ENCODE measurements at regions of chr5 and their contacts with region 1.

Region 1: DNA sequence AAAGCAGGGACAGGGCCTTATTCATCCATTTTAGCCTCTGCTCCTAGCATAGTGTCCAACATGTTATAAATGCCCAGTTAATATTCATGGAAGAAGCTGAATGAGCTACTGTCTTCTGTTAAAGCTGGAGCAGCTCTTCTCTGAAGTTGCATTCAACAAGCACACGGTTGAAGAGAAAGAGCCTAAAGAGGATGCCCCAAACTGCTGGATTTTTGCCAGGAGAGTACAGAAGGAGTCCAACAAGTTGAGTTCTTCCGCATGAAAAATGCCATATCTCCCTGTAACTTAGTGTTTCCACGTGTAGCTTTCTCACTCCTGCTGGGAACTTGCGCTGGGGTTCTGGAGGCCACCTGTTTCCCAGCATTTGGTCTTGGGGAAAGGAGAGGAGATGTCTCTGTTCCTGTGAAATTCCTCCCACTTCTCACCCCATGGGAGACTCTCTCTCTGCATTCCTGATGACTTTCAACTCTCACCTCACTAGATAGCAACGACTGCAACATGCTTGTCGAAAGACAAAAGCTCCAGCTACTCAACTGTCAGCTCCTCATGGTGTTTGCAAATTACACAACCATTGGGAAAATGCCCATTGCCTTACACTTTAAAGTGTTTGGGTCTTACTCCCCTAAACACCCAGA is 122.8 kb downstream of the KIF4B start:
- DNase-seq: no peak
- H3K4me3 Mint-ChIP-seq: no peak overlapping the region
- H3K27ac Mint-ChIP-seq: no peak overlapping the region
- H3K4me1 Mint-ChIP-seq: peaks cover 9% of the 10 kb centered on the region
- H3K27me3 Mint-ChIP-seq: no peaks in the 10 kb centered on the region
- CTCF ChIP-seq: no peak

Region 2: GRCh38 chr5:155147222-155147621 is 10.9 kb after region 1 on chr5:
- CTCF ChIA-PET with region 1: interaction called, 17 read pairs
- POLR2A ChIA-PET with region 1: no interaction called
- intact Hi-C with region 1: no loop called
- DNase-seq: peak; percentile 39
- H3K4me3 Mint-ChIP-seq: no peak overlapping the region
- H3K27ac Mint-ChIP-seq: no peak overlapping the region
- H3K4me1 Mint-ChIP-seq: no peaks in the 10 kb centered on the region
- H3K27me3 Mint-ChIP-seq: no peaks in the 10 kb centered on the region
- CTCF ChIP-seq: peak; percentile 49

Region 3: DNA sequence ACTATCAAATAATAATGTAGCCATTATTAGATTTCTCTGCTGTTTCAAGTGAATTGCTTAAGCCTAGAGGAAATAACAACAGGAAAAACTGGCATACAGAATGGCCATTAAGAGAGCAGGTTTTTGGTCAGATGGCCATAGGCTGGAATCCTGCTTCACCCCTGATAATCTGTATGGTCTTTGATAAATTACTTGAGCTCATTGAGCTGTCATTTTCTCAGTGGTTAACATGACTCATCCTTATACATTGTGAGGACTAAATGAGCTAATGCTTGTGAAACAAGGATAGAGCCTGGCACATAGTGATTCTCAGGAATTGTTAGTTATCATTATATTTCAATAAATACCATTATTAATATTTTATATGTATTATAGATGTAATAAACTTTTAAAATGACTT is 393.7 kb after region 1 on chr5:
- CTCF ChIA-PET with region 1: interaction called, 13 read pairs
- POLR2A ChIA-PET with region 1: no interaction called
- intact Hi-C with region 1: no loop called
- DNase-seq: peak; percentile 43
- H3K4me3 Mint-ChIP-seq: peak overlapping the region; percentile 22
- H3K27ac Mint-ChIP-seq: peak overlapping the region; percentile 81
- H3K4me1 Mint-ChIP-seq: peaks cover 47% of the 10 kb centered on the region
- H3K27me3 Mint-ChIP-seq: no peaks in the 10 kb centered on the region
- CTCF ChIP-seq: no peak

Region 4: DNA sequence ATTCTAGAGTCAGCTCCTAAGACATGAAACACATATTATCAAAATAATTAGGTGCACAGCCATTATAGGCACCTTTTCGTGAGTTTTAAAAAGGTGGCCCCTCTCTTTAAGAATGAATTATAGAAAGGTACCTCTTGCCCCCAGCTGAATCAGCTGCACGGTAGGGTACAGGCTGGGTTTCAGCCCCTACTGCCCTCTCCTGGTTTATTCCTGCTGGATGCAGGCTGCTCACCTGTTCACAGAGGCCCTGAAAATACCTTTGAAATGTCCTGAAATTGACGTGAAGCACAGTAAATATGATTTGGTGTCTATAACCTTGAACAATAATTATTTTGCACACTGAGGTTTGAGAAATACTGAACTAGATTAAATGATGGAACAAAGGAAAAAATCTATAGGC is 685.8 kb after region 1 on chr5:
- CTCF ChIA-PET with region 1: interaction called, 13 read pairs
- POLR2A ChIA-PET with region 1: no interaction called
- intact Hi-C with region 1: loop called (anchors 10 kb)
- DNase-seq: no peak
- H3K4me3 Mint-ChIP-seq: no peak overlapping the region
- H3K27ac Mint-ChIP-seq: no peak overlapping the region
- H3K4me1 Mint-ChIP-seq: no peaks in the 10 kb centered on the region
- H3K27me3 Mint-ChIP-seq: no peaks in the 10 kb centered on the region
- CTCF ChIP-seq: peak; percentile 21

Region 5: DNA sequence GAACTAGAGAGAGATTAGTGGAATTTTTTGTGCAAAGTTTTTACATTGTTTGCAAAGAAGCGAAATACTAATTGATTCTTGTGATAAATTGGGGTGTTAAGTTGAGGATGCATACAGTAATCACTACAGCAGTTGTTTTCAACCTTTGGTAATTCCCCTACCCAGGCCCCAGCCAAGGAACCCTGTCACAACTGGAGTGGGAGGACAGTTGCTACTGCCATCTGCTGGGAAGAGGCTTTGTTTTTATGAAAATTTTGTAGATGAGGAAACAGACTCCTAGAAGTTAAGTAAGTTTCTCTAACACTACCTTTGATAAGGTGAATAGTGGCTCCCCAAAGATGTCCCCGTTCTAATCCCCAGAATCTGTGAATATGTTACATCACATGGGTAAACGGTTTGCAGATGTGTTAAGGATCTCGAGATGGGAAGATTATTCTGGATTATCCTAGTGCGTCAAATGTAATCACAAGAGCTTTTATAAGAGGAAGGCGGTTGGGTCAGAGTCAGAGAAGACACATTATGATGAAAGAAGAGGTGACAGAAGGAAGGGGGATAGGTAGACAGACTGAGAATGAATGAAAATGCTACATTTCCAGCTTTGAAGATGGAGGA is 1679.8 kb after region 1 on chr5:
- CTCF ChIA-PET with region 1: interaction called, 11 read pairs
- POLR2A ChIA-PET with region 1: no interaction called
- intact Hi-C with region 1: loop called (anchors 2 kb)
- DNase-seq: peak; percentile 8
- H3K4me3 Mint-ChIP-seq: no peak overlapping the region
- H3K27ac Mint-ChIP-seq: no peak overlapping the region
- H3K4me1 Mint-ChIP-seq: no peaks in the 10 kb centered on the region
- H3K27me3 Mint-ChIP-seq: no peaks in the 10 kb centered on the region
- CTCF ChIP-seq: peak; percentile 69

Measured in MCF 10A (cell line).